Psoas muscle (tissue), 8 donors: ENCODE measurements at regions of chr12 and their contacts with region 1.

Region 1: GRCh38 chr12:94712815-94713515 is 62.6 kb upstream of the TMCC3 start:
- DNase-seq: peak in 1 of 2 donors; percentile 60
- ATAC-seq: peak; percentile 89
- H3K4me3 ChIP-seq: no peak overlapping the region
- H3K27ac ChIP-seq: peak overlapping the region; percentile 82
- H3K4me1 ChIP-seq: peaks cover 31% of the 10 kb centered on the region
- H3K27me3 ChIP-seq: no peaks in the 10 kb centered on the region
- CTCF ChIP-seq: peak; percentile 8

Region 2: GRCh38 chr12:94459728-94460615 is 253.0 kb before region 1 on chr12 and contains the start of gene CEP83:
- intact Hi-C with region 1: no loop called
- DNase-seq: peak; percentile 97 to 98
- ATAC-seq: peak; percentile 98 to 100 (median 100)
- H3K4me3 ChIP-seq: peak within 1 kb of the TSS; percentile 77
- H3K27ac ChIP-seq: peak within 1 kb of the TSS; percentile 87
- H3K4me1 ChIP-seq: peaks cover 8% of the 10 kb centered on the region
- H3K27me3 ChIP-seq: no peaks in the 10 kb centered on the region
- CTCF ChIP-seq: no peak
- total RNA-seq, gene CEP83: 6.5 to 8.4 (median 7.5) TPM

Region 3: GRCh38 chr12:94545935-94546771 is 166.8 kb before region 1 on chr12:
- intact Hi-C with region 1: no loop called
- DNase-seq: no peak
- ATAC-seq: peak; percentile 92 to 96 (median 94)
- H3K4me3 ChIP-seq: no peak overlapping the region
- H3K27ac ChIP-seq: no peak overlapping the region
- H3K4me1 ChIP-seq: no peaks in the 10 kb centered on the region
- H3K27me3 ChIP-seq: no peaks in the 10 kb centered on the region
- CTCF ChIP-seq: peak; percentile 84

Region 4: GRCh38 chr12:94649349-94650142 is 63.4 kb before region 1 on chr12:
- intact Hi-C with region 1: loop called in 1 of 2 experiments (anchors 2 kb)
- DNase-seq: peak; percentile 64 to 79
- ATAC-seq: peak; percentile 63 to 73 (median 72)
- H3K4me3 ChIP-seq: peak overlapping the region; percentile 94
- H3K27ac ChIP-seq: peak overlapping the region; percentile 98
- H3K4me1 ChIP-seq: peaks cover 39% of the 10 kb centered on the region
- H3K27me3 ChIP-seq: no peaks in the 10 kb centered on the region
- CTCF ChIP-seq: peak; percentile 47